Right ventricle myocardium inferior (tissue), 1 donor: ENCODE measurements at regions of chr6 and their contacts with region 1.

Region 1: GRCh38 chr6:169831450-169832246 is 80.2 kb downstream of the ERMARD start:
- DNase-seq: peak; percentile 88
- ATAC-seq: peak; percentile 79

Region 2: GRCh38 chr6:169933839-169934698 is 102.4 kb after region 1 on chr6:
- intact Hi-C with region 1: loop called (anchors 5 kb)
- DNase-seq: no peak
- ATAC-seq: peak; percentile 36

Region 3: DNA sequence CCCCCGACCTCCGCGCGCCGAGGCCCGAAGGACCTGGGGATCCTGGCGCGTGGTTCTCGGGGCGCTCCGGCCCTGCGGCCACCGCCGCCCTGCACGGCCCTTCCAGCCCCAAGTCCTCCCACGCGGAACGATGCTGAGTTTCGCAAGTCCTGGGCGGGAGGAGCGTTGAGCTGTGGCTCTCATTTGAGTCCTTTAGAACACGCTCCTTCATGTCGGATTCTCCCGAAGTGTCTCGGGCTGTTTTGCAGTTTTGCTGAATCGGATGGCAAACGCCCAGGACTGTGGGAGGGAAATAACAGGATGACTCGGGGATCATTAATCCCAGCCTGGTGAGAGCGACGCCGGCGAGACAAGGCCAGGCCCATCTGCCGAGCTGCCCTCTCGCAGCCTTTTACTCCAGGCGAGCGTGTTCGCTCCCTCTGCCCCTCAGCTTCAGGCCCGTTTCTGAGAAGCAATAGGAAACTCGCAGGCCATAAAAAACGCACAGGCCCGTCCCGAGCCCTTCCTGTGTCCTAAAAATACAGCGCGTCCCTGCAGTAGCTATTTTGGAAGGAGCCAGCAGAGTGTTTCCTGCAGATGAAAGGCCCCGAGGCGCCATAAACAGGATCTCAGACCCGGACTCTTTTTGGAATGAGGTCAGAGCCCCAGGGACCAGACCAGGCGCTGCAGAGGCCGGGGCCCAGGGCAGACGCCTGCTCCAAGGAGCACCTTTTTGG is 305.7 kb after region 1 on chr6:
- intact Hi-C with region 1: no loop called
- DNase-seq: no peak
- ATAC-seq: peak; percentile 70

Region 4: DNA sequence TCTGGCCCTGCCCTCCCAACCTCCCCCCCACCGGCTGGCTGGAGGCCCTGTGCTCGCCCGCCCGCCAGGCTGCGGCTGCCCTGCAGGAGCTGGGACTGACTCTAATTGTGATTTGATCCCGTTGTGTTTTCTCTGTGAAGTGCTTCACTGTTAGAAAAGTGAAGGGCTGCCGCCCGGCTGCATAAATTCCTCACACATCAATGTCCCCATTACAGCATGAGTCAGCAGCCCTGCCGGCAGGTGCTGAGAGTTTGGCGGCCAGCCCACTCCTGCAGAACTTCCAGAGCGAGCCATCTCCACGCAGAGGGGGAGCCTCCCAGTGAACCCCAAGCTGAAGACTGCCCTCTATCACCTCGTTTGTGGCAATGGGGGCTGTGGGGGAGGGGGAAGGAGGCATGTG is 321.3 kb after region 1 on chr6:
- intact Hi-C with region 1: loop called (anchors 10 kb)
- DNase-seq: peak; percentile 58
- ATAC-seq: peak; percentile 43

Region 5: GRCh38 chr6:170291271-170292110 is 459.8 kb after region 1 on chr6:
- intact Hi-C with region 1: loop called (anchors 2 kb)
- DNase-seq: peak; percentile 89
- ATAC-seq: peak; percentile 49